CD8-positive, alpha-beta T cell (primary cell): ENCODE measurements at regions of chr3 and their contacts with region 1.

Region 1: DNA sequence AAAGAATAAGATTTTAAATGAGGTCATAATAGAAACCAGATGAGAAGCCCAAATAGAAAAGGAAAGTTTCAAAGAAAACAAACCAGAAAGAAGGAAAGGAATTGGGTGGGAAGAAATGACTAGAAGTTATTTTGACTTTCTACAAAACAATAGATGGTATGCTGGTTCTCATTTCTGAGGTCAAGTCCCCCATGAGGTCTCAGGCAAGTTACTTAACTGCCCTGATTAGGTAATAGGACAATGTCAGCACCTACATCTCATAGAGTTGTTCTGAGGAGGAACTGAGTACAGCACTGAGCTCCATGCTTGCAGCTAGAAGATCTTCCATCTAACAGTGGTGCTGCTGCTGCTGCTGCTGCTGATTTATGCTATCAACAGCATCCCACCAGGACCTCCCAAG is 185.9 kb downstream of the ERC2 start:
- DNase-seq: no peak
- ATAC-seq: no peak
- H3K4me3 ChIP-seq: no peak overlapping the region
- H3K4me3 Mint-ChIP-seq: no peak overlapping the region
- H3K27ac ChIP-seq: no peak overlapping the region
- H3K27ac Mint-ChIP-seq: no peak overlapping the region
- H3K4me1 ChIP-seq: no peaks in the 10 kb centered on the region
- H3K4me1 Mint-ChIP-seq: no peaks in the 10 kb centered on the region
- H3K27me3 ChIP-seq: no peaks in the 10 kb centered on the region
- H3K27me3 Mint-ChIP-seq: peaks cover 28% of the 10 kb centered on the region
- CTCF ChIP-seq: no peak

Region 2: DNA sequence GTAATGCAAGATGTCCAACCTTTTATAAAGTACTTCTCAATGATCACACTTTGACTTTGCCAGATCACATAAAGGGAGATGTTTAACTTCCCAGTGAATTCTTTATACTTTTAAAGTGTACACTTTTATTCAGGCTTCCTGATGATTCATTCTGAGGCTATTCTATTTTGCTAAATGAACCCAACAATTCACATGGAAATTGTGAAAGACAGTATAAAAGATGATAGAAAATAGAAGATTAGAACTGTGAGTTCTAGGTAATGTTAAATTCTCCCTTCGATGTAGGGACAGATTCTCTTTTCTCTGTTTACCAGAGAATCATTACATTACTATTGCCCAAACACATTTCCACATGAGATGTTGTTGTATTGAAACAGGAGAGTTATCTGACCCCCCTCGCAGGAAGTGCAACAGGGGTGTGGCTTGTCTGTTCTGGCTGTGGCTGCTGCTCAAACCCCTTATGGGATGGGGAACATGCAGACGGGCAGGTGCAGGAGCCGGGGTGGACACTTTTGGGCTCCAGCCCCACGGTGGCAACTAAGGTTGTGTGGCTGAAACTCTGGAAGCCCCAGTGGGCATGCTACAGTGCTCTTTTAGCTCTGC is 1223.2 kb before region 1 on chr3:
- CTCF ChIA-PET with region 1: no interaction called
- POLR2A ChIA-PET with region 1: no interaction called
- intact Hi-C with region 1: loop called in 1 of 2 experiments (anchors 10 kb)
- DNase-seq: no peak
- ATAC-seq: no peak
- H3K4me3 ChIP-seq: no peak overlapping the region
- H3K4me3 Mint-ChIP-seq: no peak overlapping the region
- H3K27ac ChIP-seq: no peak overlapping the region
- H3K27ac Mint-ChIP-seq: no peak overlapping the region
- H3K4me1 ChIP-seq: no peaks in the 10 kb centered on the region
- H3K4me1 Mint-ChIP-seq: no peaks in the 10 kb centered on the region
- H3K27me3 ChIP-seq: no peaks in the 10 kb centered on the region
- H3K27me3 Mint-ChIP-seq: peaks cover 2% of the 10 kb centered on the region
- CTCF ChIP-seq: no peak

Region 3: GRCh38 chr3:57436195-57436761 is 1153.9 kb after region 1 on chr3:
- CTCF ChIA-PET with region 1: no interaction called
- POLR2A ChIA-PET with region 1: no interaction called
- intact Hi-C with region 1: no loop called
- DNase-seq: no peak
- ATAC-seq: no peak
- H3K4me3 ChIP-seq: no peak overlapping the region
- H3K4me3 Mint-ChIP-seq: no peak overlapping the region
- H3K27ac ChIP-seq: no peak overlapping the region
- H3K27ac Mint-ChIP-seq: no peak overlapping the region
- H3K4me1 ChIP-seq: no peaks in the 10 kb centered on the region
- H3K4me1 Mint-ChIP-seq: no peaks in the 10 kb centered on the region
- H3K27me3 ChIP-seq: no peaks in the 10 kb centered on the region
- H3K27me3 Mint-ChIP-seq: peaks cover 7% of the 10 kb centered on the region
- CTCF ChIP-seq: no peak